ENCODE measurements at regions of chr14 and their contacts with region 1.

Region 1: GRCh38 chr14:24678801-24679247 is 44.8 kb upstream of the GZMB start:
- DNase-seq: peak; percentile 65 to 96
- ATAC-seq: peak; percentile 62 to 89 (median 73)
- H3K4me3 ChIP-seq: peak overlapping the region; percentile 79
- H3K4me3 Mint-ChIP-seq: peak overlapping the region; percentile 99
- H3K27ac ChIP-seq: peak overlapping the region; percentile 92
- H3K27ac Mint-ChIP-seq: peak overlapping the region; percentile 99
- H3K4me1 ChIP-seq: peaks cover 52% of the 10 kb centered on the region
- H3K4me1 Mint-ChIP-seq: peaks cover 87 to 92% of the 10 kb centered on the region in 2 donors
- H3K27me3 ChIP-seq: no peaks in the 10 kb centered on the region
- H3K27me3 Mint-ChIP-seq: no peaks in the 10 kb centered on the region
- CTCF ChIP-seq: peak; percentile 100

Region 2: GRCh38 chr14:24442273-24443052 is 236.4 kb before region 1 on chr14 and contains the start of gene SDR39U1:
- intact Hi-C with region 1: loop called (anchors 10 kb)
- DNase-seq: peak; percentile 88 to 100
- ATAC-seq: peak; percentile 88 to 97 (median 92)
- H3K4me3 ChIP-seq: peak within 1 kb of the TSS; percentile 92
- H3K4me3 Mint-ChIP-seq: peak within 1 kb of the TSS; percentile 91
- H3K27ac ChIP-seq: peak within 1 kb of the TSS; percentile 96
- H3K27ac Mint-ChIP-seq: peak within 1 kb of the TSS; percentile 97 to 98
- H3K4me1 ChIP-seq: peaks cover 25% of the 10 kb centered on the region
- H3K4me1 Mint-ChIP-seq: peaks cover 37 to 48% of the 10 kb centered on the region in 2 donors
- H3K27me3 ChIP-seq: no peaks in the 10 kb centered on the region
- H3K27me3 Mint-ChIP-seq: peaks cover 0 to 5% of the 10 kb centered on the region in 2 donors
- CTCF ChIP-seq: no peak
- total RNA-seq, gene SDR39U1: 97.1 to 106 (median 100) TPM

Region 3: GRCh38 chr14:24542346-24542936 is 136.4 kb before region 1 on chr14:
- intact Hi-C with region 1: no loop called
- DNase-seq: no peak
- ATAC-seq: no peak
- H3K4me3 ChIP-seq: no peak overlapping the region
- H3K4me3 Mint-ChIP-seq: no peak overlapping the region
- H3K27ac ChIP-seq: no peak overlapping the region
- H3K27ac Mint-ChIP-seq: no peak overlapping the region
- H3K4me1 ChIP-seq: no peaks in the 10 kb centered on the region
- H3K4me1 Mint-ChIP-seq: peaks cover 0 to 7% of the 10 kb centered on the region in 2 donors
- H3K27me3 ChIP-seq: no peaks in the 10 kb centered on the region
- H3K27me3 Mint-ChIP-seq: peaks cover 0 to 23% of the 10 kb centered on the region in 2 donors
- CTCF ChIP-seq: no peak

Region 4: DNA sequence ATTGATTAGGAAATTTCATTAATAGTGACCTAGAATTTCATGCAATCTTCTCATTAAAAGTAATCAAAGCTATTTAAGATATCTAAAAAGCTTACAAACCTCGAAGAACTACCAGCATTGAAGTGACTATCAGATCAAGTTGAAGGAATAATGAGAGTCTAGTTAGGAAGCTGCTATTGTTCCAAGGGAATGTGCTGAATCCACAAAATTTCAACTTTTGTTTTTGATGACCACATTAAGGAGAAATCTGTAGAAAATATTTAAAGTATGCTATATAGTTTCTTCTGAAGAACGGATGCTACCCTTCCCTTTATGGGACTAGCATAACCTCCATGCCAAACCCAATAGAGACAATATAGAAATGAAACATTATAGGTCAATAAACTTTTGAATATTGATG is 100.3 kb before region 1 on chr14:
- intact Hi-C with region 1: no loop called
- DNase-seq: no peak
- ATAC-seq: no peak
- H3K4me3 ChIP-seq: no peak overlapping the region
- H3K4me3 Mint-ChIP-seq: no peak overlapping the region
- H3K27ac ChIP-seq: no peak overlapping the region
- H3K27ac Mint-ChIP-seq: no peak overlapping the region
- H3K4me1 ChIP-seq: peaks cover 4% of the 10 kb centered on the region
- H3K4me1 Mint-ChIP-seq: peaks cover 0 to 24% of the 10 kb centered on the region in 2 donors
- H3K27me3 ChIP-seq: no peaks in the 10 kb centered on the region
- H3K27me3 Mint-ChIP-seq: no peaks in the 10 kb centered on the region
- CTCF ChIP-seq: no peak

Region 5: DNA sequence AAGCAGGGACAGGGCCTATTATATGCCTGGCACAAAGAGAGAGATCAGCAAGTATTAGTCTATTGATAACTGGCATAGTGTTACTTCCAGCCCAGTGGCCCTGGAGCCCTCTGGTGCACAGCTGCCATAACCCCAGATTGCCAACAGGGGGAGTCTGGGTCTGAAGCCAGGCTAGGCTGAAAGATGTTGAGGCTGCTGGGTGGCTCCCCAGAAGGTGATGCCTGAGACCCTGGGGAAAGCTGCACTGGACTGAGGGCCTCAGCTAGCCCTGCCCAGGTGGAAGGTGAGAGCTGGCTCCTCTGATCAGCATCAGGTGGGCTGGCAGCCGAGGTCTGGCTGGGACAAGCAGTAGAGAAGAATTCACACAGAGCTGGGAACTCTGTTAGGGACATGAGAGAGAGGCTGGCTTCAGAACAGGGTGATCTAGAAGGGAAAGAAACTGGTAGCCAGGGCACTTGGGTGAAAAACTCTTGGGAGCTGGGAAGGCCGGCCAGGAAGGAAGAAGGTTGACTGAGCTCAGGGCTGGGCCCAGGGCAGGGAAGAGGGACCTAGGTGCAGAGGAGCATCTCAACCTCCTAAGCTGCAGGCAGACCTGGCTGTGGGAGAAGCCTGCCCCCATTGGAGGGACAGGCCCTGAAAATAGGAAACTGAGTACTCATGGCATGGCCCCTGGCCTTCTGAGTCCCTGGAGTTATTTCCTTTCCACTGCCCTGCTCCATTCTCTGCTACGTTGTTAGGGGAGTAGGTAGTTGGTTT is 73.2 kb before region 1 on chr14:
- intact Hi-C with region 1: loop called (anchors 1 kb)
- DNase-seq: peak; percentile 70 to 78
- ATAC-seq: peak; percentile 62 to 71 (median 66)
- H3K4me3 ChIP-seq: peak overlapping the region; percentile 1
- H3K4me3 Mint-ChIP-seq: peak overlapping the region; percentile 95
- H3K27ac ChIP-seq: peak overlapping the region; percentile 83
- H3K27ac Mint-ChIP-seq: peak overlapping the region; percentile 99
- H3K4me1 ChIP-seq: peaks cover 55% of the 10 kb centered on the region
- H3K4me1 Mint-ChIP-seq: peaks cover 55 to 58% of the 10 kb centered on the region in 2 donors
- H3K27me3 ChIP-seq: no peaks in the 10 kb centered on the region
- H3K27me3 Mint-ChIP-seq: no peaks in the 10 kb centered on the region
- CTCF ChIP-seq: peak; percentile 96

Region 6: GRCh38 chr14:24665440-24665991 is 13.3 kb before region 1 on chr14:
- intact Hi-C with region 1: loop called (anchors 2 kb)
- DNase-seq: peak; percentile 41 to 54
- ATAC-seq: peak; percentile 85 to 89 (median 86)
- H3K4me3 ChIP-seq: no peak overlapping the region
- H3K4me3 Mint-ChIP-seq: peak overlapping the region; percentile 78
- H3K27ac ChIP-seq: peak overlapping the region; percentile 62
- H3K27ac Mint-ChIP-seq: peak overlapping the region; percentile 86 to 90
- H3K4me1 ChIP-seq: peaks cover 38% of the 10 kb centered on the region
- H3K4me1 Mint-ChIP-seq: peaks cover 79 to 86% of the 10 kb centered on the region in 2 donors
- H3K27me3 ChIP-seq: no peaks in the 10 kb centered on the region
- H3K27me3 Mint-ChIP-seq: no peaks in the 10 kb centered on the region
- CTCF ChIP-seq: no peak

Region 7: GRCh38 chr14:24710403-24711112 is 31.7 kb after region 1 on chr14:
- intact Hi-C with region 1: loop called (anchors 1 kb)
- DNase-seq: peak; percentile 55 to 77
- ATAC-seq: peak; percentile 77 to 91 (median 80)
- H3K4me3 ChIP-seq: no peak overlapping the region
- H3K4me3 Mint-ChIP-seq: no peak overlapping the region
- H3K27ac ChIP-seq: no peak overlapping the region
- H3K27ac Mint-ChIP-seq: peak overlapping the region in 1 of 2 donors; percentile 73
- H3K4me1 ChIP-seq: peaks cover 18% of the 10 kb centered on the region
- H3K4me1 Mint-ChIP-seq: peaks cover 31 to 40% of the 10 kb centered on the region in 2 donors
- H3K27me3 ChIP-seq: no peaks in the 10 kb centered on the region
- H3K27me3 Mint-ChIP-seq: peaks cover 4 to 8% of the 10 kb centered on the region in 2 donors
- CTCF ChIP-seq: peak; percentile 84

Region 8: GRCh38 chr14:24817212-24818057 is 138.6 kb after region 1 on chr14:
- intact Hi-C with region 1: no loop called
- DNase-seq: no peak
- ATAC-seq: no peak
- H3K4me3 ChIP-seq: no peak overlapping the region
- H3K4me3 Mint-ChIP-seq: no peak overlapping the region
- H3K27ac ChIP-seq: no peak overlapping the region
- H3K27ac Mint-ChIP-seq: no peak overlapping the region
- H3K4me1 ChIP-seq: no peaks in the 10 kb centered on the region
- H3K4me1 Mint-ChIP-seq: no peaks in the 10 kb centered on the region
- H3K27me3 ChIP-seq: no peaks in the 10 kb centered on the region
- H3K27me3 Mint-ChIP-seq: peaks cover 21 to 51% of the 10 kb centered on the region in 2 donors
- CTCF ChIP-seq: no peak

Measured in natural killer cell (primary cell).